CD4-positive, alpha-beta memory T cell (primary cell): ENCODE measurements at regions of chr16 and their contacts with region 1.

Region 1: DNA sequence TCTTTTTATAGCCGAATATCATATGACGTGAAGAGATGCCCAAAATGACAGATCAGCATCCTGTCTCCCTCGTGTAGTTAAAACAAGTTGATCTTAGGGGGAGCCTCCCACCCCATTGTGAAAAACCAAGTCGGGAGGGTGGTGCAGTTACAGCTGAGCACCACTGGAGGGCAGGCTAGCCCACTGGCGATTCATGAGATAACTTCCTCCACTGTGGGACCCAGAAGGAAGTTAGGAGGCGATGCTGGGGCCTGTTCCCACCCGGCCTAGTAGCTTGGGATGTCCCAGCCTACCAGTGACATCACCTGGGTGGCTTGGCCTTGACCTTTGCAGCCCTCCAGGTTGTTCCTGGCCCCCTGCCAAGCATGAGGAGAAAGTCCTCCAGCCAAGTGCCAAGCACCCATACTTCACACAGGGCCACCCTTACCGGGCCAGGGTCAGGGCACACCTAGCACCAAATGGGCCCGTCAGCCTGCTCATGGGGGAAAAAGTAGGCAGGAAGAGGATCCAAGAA is 8.1 kb upstream of the CPNE2 start:
- DNase-seq: peak; percentile 78 to 81 (median 79)
- H3K4me3 ChIP-seq: no peak overlapping the region
- H3K4me3 Mint-ChIP-seq: peak overlapping the region in 1 of 8 donors; percentile 30
- H3K27ac ChIP-seq: peak overlapping the region; percentile 29
- H3K27ac Mint-ChIP-seq: peak overlapping the region; percentile 85 to 95 (median 91)
- H3K4me1 ChIP-seq: peaks cover 10% of the 10 kb centered on the region
- H3K4me1 Mint-ChIP-seq: peaks cover 5 to 18% (median 11%) of the 10 kb centered on the region in 4 donors
- H3K27me3 ChIP-seq: no peaks in the 10 kb centered on the region
- H3K27me3 Mint-ChIP-seq: no peaks in the 10 kb centered on the region

Region 2: DNA sequence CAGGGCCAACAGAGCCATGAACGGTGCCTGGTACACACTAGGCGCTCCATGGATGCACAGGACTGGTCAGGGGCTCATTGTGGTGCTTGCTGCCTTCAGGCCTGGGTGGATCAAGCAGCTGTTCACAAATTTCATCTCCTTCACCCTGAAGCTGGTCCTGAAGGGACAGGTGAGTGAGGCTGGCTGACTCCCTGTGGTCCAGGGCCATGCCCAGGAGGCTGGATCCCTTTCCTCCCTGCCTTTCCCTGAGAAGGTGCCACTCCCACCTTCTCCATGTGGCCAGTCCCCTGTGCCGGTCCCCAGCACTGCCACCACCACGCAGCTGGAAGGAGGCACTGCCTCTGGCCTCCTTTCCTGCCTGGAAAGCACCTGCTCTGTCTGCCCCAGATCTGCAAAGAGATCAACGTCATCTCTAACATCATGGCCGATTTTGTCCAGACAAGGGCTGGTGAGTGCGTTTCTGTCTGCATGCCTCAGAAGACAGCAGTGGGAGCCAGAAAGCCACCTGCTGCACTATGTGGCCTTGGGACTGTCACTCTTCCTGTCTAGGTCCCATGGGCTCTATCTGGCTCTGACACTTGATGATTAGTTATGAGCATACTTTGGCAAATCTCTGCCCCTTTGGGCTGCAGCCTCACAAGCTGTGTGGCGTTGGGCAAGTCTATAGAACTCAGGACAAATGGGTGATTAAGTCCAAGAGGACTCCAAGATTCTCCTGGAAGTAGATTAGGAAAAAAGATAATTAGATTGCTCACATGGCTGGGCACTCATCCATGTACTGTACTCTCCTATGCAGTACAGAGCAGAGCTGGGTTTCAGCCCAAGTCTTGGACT is 113.2 kb before region 1 on chr16:
- CTCF ChIA-PET with region 1: interaction called, 81 read pairs
- POLR2A ChIA-PET with region 1: interaction called, 10 read pairs
- intact Hi-C with region 1: no loop called
- DNase-seq: peak in 3 of 5 donors; percentile 28 to 67 (median 41)
- H3K4me3 ChIP-seq: no peak overlapping the region
- H3K4me3 Mint-ChIP-seq: peak overlapping the region in 2 of 8 donors; percentile 59
- H3K27ac ChIP-seq: no peak overlapping the region
- H3K27ac Mint-ChIP-seq: peak overlapping the region; percentile 18 to 89 (median 73)
- H3K4me1 ChIP-seq: peaks cover 26% of the 10 kb centered on the region
- H3K4me1 Mint-ChIP-seq: peaks cover 19 to 50% (median 30%) of the 10 kb centered on the region in 4 donors
- H3K27me3 ChIP-seq: no peaks in the 10 kb centered on the region
- H3K27me3 Mint-ChIP-seq: no peaks in the 10 kb centered on the region

Region 3: DNA sequence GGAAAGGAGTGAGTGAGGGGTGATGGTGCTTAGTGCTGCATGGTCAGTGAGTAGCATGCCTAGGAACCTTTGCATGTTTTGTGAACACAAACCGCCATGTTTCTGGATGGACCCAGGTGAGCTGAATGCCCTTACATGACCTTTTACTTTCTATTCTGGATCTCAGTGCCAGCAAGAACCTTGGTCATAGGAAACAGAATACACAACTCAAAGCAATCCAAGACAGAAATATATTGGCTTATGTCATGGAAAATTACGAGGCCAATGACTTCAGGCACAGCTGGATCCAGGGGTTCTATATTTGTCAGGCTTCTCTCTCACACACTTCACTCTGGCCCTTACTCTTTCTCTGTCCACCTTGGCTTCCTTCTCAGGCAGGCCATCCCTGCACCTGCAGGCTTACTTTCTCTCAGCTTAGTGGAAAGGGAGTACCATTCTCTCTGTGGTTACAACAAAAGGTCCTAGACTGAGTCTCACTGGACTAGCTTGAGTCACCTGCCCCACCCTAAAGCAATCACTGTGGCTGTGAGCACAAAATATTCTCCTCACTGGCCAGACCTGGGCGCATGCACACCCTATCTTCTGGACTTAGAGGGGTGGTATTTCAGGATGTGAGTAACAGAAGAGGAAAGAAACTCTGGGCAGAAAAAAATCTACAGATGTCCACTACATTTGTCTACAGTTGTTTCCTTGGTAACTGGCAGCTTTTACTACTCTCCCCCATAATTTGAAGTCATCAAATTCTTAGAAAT is 12.3 kb before region 1 on chr16:
- CTCF ChIA-PET with region 1: interaction called, 11 read pairs
- POLR2A ChIA-PET with region 1: interaction called, 6 read pairs
- intact Hi-C with region 1: no loop called
- DNase-seq: no peak
- H3K4me3 ChIP-seq: no peak overlapping the region
- H3K4me3 Mint-ChIP-seq: peak overlapping the region in 1 of 8 donors; percentile 41
- H3K27ac ChIP-seq: no peak overlapping the region
- H3K27ac Mint-ChIP-seq: peak overlapping the region; percentile 48 to 84 (median 62)
- H3K4me1 ChIP-seq: peaks cover 4% of the 10 kb centered on the region
- H3K4me1 Mint-ChIP-seq: peaks cover 4 to 7% (median 6%) of the 10 kb centered on the region in 4 donors
- H3K27me3 ChIP-seq: no peaks in the 10 kb centered on the region
- H3K27me3 Mint-ChIP-seq: no peaks in the 10 kb centered on the region

Region 4: GRCh38 chr16:57128771-57129389 is 44.6 kb after region 1 on chr16:
- CTCF ChIA-PET with region 1: interaction called, 17 read pairs
- POLR2A ChIA-PET with region 1: interaction called, 6 read pairs
- intact Hi-C with region 1: no loop called
- DNase-seq: peak; percentile 28 to 70 (median 32)
- H3K4me3 ChIP-seq: no peak overlapping the region
- H3K4me3 Mint-ChIP-seq: peak overlapping the region in 7 of 8 donors; percentile 14 to 82 (median 66)
- H3K27ac ChIP-seq: peak overlapping the region; percentile 49
- H3K27ac Mint-ChIP-seq: peak overlapping the region; percentile 17 to 95 (median 79)
- H3K4me1 ChIP-seq: peaks cover 89% of the 10 kb centered on the region
- H3K4me1 Mint-ChIP-seq: peaks cover 49 to 97% (median 74%) of the 10 kb centered on the region in 4 donors
- H3K27me3 ChIP-seq: no peaks in the 10 kb centered on the region
- H3K27me3 Mint-ChIP-seq: no peaks in the 10 kb centered on the region

Region 5: DNA sequence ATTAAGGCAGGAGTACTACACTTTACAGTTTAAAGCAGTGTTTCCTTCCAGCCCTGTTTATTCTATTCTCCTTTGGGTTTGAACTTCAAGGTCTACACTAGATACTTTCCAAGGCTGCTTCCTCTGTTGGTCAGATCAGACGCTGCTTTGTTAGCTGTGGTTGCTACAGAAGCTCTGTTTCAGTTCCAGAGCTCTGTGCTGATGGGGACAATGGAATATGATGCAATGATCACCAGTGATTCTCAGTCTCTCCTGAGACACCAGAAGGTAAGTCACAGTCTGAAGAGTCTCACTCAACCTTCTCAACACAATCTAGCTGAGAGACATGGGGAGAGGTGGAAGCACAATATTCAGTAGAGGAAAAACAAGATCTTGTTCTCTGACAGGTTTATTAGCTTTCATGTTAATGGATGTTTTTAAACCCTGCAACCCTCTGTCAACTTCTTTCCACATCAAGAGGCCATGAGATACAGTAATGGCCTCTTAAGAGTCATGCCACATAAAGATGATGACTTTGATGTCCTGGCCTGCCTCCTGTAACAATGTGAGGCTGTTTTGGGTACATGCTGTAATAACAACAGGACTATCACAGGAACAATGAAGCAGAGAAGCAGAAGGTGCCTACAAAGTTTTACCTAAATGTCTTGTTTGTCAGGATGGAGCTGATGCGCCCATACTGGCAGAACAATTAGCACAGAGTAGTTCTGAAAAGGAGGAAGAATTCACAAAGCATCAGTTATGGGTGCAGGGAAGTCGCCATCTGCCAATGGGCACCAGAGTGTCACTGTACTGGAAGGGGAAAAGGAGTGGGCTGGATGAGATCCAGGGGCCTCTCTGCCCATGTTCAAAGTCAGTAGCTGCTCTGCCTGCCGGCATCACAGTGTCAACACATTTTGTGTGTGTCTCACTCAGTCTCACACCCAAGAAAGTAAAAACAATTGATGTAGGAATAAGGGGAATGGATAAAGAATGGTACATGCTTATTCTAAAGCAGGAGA is 68.1 kb after region 1 on chr16:
- CTCF ChIA-PET with region 1: interaction called, 16 read pairs
- POLR2A ChIA-PET with region 1: no interaction called
- intact Hi-C with region 1: no loop called
- DNase-seq: no peak
- H3K4me3 ChIP-seq: no peak overlapping the region
- H3K4me3 Mint-ChIP-seq: no peak overlapping the region
- H3K27ac ChIP-seq: no peak overlapping the region
- H3K27ac Mint-ChIP-seq: peak overlapping the region in 3 of 7 donors; percentile 25 to 48 (median 38)
- H3K4me1 ChIP-seq: no peaks in the 10 kb centered on the region
- H3K4me1 Mint-ChIP-seq: peaks cover 12 to 22% (median 14%) of the 10 kb centered on the region in 4 donors
- H3K27me3 ChIP-seq: no peaks in the 10 kb centered on the region
- H3K27me3 Mint-ChIP-seq: no peaks in the 10 kb centered on the region

Region 6: GRCh38 chr16:57185944-57186871 is 101.9 kb after region 1 on chr16 and contains the starts of genes PSME3IP1 and RSPRY1:
- CTCF ChIA-PET with region 1: interaction called, 5 read pairs
- POLR2A ChIA-PET with region 1: interaction called, 8 read pairs
- intact Hi-C with region 1: loop called (anchors 5 kb)
- DNase-seq: peak; percentile 99 to 100 (median 100)
- H3K4me3 ChIP-seq: peak within 1 kb of the TSS; percentile 88
- H3K4me3 Mint-ChIP-seq: peak within 1 kb of the TSS; percentile 97 to 99 (median 99)
- H3K27ac ChIP-seq: peak within 1 kb of the TSS; percentile 87
- H3K27ac Mint-ChIP-seq: peak within 1 kb of the TSS; percentile 95 to 99 (median 97)
- H3K4me1 ChIP-seq: peaks cover 45% of the 10 kb centered on the region
- H3K4me1 Mint-ChIP-seq: peaks cover 36 to 60% (median 48%) of the 10 kb centered on the region in 4 donors
- H3K27me3 ChIP-seq: no peaks in the 10 kb centered on the region
- H3K27me3 Mint-ChIP-seq: no peaks in the 10 kb centered on the region
- total RNA-seq, gene PSME3IP1: 147 to 157 TPM
- total RNA-seq, gene RSPRY1: 32.8 to 38.0 TPM

Region 7: GRCh38 chr16:57519796-57520360 is 435.6 kb after region 1 on chr16:
- CTCF ChIA-PET with region 1: no interaction called
- POLR2A ChIA-PET with region 1: no interaction called
- intact Hi-C with region 1: loop called (anchors 1 kb)
- DNase-seq: peak; percentile 70 to 76 (median 72)
- H3K4me3 ChIP-seq: no peak overlapping the region
- H3K4me3 Mint-ChIP-seq: no peak overlapping the region
- H3K27ac ChIP-seq: no peak overlapping the region
- H3K27ac Mint-ChIP-seq: peak overlapping the region in 1 of 7 donors; percentile 2
- H3K4me1 ChIP-seq: no peaks in the 10 kb centered on the region
- H3K4me1 Mint-ChIP-seq: peaks cover 0 to 6% (median 3%) of the 10 kb centered on the region in 4 donors
- H3K27me3 ChIP-seq: no peaks in the 10 kb centered on the region
- H3K27me3 Mint-ChIP-seq: no peaks in the 10 kb centered on the region